Naive thymus-derived CD8-positive, alpha-beta T cell (primary cell): ENCODE measurements at regions of chr10 and their contacts with region 1.

Region 1: GRCh38 chr10:110857265-110858158 is 14.2 kb upstream of the PDCD4 start:
- DNase-seq: no peak
- ATAC-seq: no peak
- H3K4me3 Mint-ChIP-seq: peak overlapping the region in 8 of 10 donors; percentile 37 to 67 (median 45)
- H3K27ac Mint-ChIP-seq: peak overlapping the region; percentile 49 to 100 (median 98)
- H3K4me1 Mint-ChIP-seq: peaks cover 39 to 90% (median 86%) of the 10 kb centered on the region in 4 donors
- H3K27me3 Mint-ChIP-seq: no peaks in the 10 kb centered on the region

Region 2: DNA sequence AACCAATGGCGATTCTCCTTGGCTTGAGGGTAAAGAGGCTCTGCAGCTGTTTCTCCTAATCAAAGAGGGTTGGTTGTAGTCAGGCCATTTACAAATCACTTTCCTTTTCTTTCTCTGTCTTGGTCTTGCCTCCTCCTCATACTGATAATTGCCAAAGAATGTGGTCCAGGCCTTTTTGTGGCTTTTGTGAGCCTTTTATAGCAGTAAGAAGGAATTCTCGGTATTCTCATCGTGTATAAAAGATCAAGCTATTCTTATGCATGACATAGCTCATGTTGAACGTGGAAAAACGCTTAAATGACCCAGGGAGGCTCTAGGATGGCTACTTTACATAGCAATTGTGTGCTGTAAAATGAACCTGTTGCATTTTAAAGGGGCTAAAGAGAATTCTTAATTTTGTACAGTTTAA is 150.8 kb before region 1 on chr10:
- POLR2A ChIA-PET with region 1: no interaction called
- DNase-seq: no peak
- ATAC-seq: no peak
- H3K4me3 Mint-ChIP-seq: no peak overlapping the region
- H3K27ac Mint-ChIP-seq: no peak overlapping the region
- H3K4me1 Mint-ChIP-seq: no peaks in the 10 kb centered on the region
- H3K27me3 Mint-ChIP-seq: peaks cover 0 to 4% (median 0%) of the 10 kb centered on the region in 5 donors

Region 3: GRCh38 chr10:110843031-110843430 is 14.5 kb before region 1 on chr10:
- POLR2A ChIA-PET with region 1: interaction called, 78 read pairs
- DNase-seq: peak in 7 of 10 donors; percentile 37 to 57 (median 43)
- ATAC-seq: peak; percentile 84 to 92
- H3K4me3 Mint-ChIP-seq: peak overlapping the region in 9 of 10 donors; percentile 26 to 57 (median 40)
- H3K27ac Mint-ChIP-seq: peak overlapping the region; percentile 68 to 94 (median 84)
- H3K4me1 Mint-ChIP-seq: peaks cover 28 to 73% (median 62%) of the 10 kb centered on the region in 4 donors
- H3K27me3 Mint-ChIP-seq: no peaks in the 10 kb centered on the region

Region 4: GRCh38 chr10:110871298-110872084 is 14.0 kb after region 1 on chr10 and contains the start of gene PDCD4:
- POLR2A ChIA-PET with region 1: interaction called, 87 read pairs
- DNase-seq: peak; percentile 90 to 95 (median 92)
- ATAC-seq: peak; percentile 60 to 67
- H3K4me3 Mint-ChIP-seq: peak within 1 kb of the TSS; percentile 79 to 99 (median 96)
- H3K27ac Mint-ChIP-seq: peak within 1 kb of the TSS; percentile 97 to 100 (median 99)
- H3K4me1 Mint-ChIP-seq: peaks cover 34 to 81% (median 65%) of the 10 kb centered on the region in 4 donors
- H3K27me3 Mint-ChIP-seq: no peaks in the 10 kb centered on the region
- polyA plus RNA-seq, gene PDCD4: 318 to 385 (median 341) TPM

Region 5: GRCh38 chr10:110936757-110937156 is 79.2 kb after region 1 on chr10:
- POLR2A ChIA-PET with region 1: no interaction called
- DNase-seq: no peak
- ATAC-seq: no peak
- H3K4me3 Mint-ChIP-seq: peak overlapping the region in 1 of 10 donors; percentile 11
- H3K27ac Mint-ChIP-seq: peak overlapping the region in 1 of 10 donors; percentile 46
- H3K4me1 Mint-ChIP-seq: peaks cover 7 to 53% (median 33%) of the 10 kb centered on the region in 4 donors
- H3K27me3 Mint-ChIP-seq: no peaks in the 10 kb centered on the region

Region 6: DNA sequence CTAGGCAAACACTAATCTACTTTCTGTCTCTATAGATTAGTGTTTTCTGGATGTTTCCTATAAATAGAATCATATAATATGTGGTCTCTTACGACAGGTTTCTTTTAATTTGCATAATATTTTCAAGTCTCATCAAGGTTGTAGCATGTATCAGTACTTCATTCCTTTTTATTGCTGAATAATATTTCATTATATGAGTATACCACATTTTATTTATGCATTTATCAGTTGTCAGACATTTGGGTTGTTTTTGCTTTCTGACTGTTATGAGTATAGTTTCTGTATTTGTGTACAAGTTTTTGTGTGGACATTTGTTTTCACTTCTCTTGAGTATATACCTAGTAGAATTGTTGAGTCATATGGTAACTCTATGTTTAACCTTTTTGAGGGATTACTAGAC is 110.1 kb after region 1 on chr10:
- POLR2A ChIA-PET with region 1: no interaction called
- DNase-seq: no peak
- ATAC-seq: no peak
- H3K4me3 Mint-ChIP-seq: no peak overlapping the region
- H3K27ac Mint-ChIP-seq: no peak overlapping the region
- H3K4me1 Mint-ChIP-seq: peaks cover 36 to 76% (median 53%) of the 10 kb centered on the region in 4 donors
- H3K27me3 Mint-ChIP-seq: no peaks in the 10 kb centered on the region